ENCODE measurements at regions of chr9 and their contacts with region 1.

Region 1: GRCh38 chr9:96449845-96450612 is at the start of gene HABP4:
- DNase-seq: peak; percentile 97
- H3K4me3 ChIP-seq: peak within 1 kb of the TSS; percentile 80
- H3K27ac ChIP-seq: no peak within 1 kb of the TSS
- H3K4me1 ChIP-seq: peaks cover 16% of the 10 kb centered on the region
- CTCF ChIP-seq: no peak
- total RNA-seq, gene HABP4: 6.0 and 7.1 TPM in 2 replicates

Region 2: DNA sequence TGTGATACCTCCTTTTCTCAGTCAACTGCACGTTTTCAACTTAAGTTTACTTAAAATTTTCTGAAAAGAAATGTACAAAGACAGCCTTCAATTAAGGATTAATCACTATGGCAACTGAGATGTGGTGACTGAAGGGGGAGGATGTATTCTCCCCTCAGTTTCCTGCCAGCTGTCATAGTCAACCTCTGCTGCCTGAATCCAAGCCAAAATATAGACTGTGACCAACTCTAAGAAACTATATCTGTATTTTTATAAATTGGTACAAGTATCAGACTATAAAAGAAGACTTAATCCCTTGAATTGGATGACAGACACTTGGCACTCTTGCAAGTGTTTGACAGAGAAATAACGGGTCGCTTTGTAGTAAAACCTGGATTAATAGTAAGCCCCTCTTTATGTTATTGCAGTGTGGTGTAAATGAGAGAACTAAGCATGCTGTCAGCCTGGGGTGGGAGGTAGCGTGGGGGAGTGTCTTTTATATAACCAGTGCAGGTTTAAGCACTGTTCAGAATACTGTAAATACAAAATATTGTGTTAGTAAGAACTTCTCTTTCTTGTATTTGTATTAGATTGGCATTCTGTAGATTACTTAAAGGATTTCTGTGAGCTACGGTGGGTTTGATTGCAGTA is 468.2 kb before region 1 on chr9:
- CTCF ChIA-PET with region 1: no interaction called
- POLR2A ChIA-PET with region 1: no interaction called
- intact Hi-C with region 1: no loop called
- DNase-seq: peak; percentile 10
- H3K4me3 ChIP-seq: no peak overlapping the region
- H3K27ac ChIP-seq: no peak overlapping the region
- H3K4me1 ChIP-seq: no peaks in the 10 kb centered on the region
- CTCF ChIP-seq: no peak

Region 3: GRCh38 chr9:96418074-96418809 is 31.8 kb before region 1 on chr9 and contains the start of gene ZNF367:
- CTCF ChIA-PET with region 1: no interaction called
- POLR2A ChIA-PET with region 1: interaction called, 5 read pairs
- intact Hi-C with region 1: loop called (anchors 2 kb)
- DNase-seq: peak; percentile 95
- H3K4me3 ChIP-seq: peak within 1 kb of the TSS; percentile 99
- H3K27ac ChIP-seq: peak within 1 kb of the TSS; percentile 99
- H3K4me1 ChIP-seq: peaks cover 48% of the 10 kb centered on the region
- CTCF ChIP-seq: no peak
- total RNA-seq, gene ZNF367: 33.3 and 35.1 TPM in 2 replicates

Region 4: GRCh38 chr9:96491079-96491879 is 41.2 kb after region 1 on chr9:
- CTCF ChIA-PET with region 1: no interaction called
- POLR2A ChIA-PET with region 1: no interaction called
- intact Hi-C with region 1: no loop called
- DNase-seq: no peak
- H3K4me3 ChIP-seq: no peak overlapping the region
- H3K27ac ChIP-seq: no peak overlapping the region
- H3K4me1 ChIP-seq: peaks cover 9% of the 10 kb centered on the region
- CTCF ChIP-seq: no peak

Region 5: DNA sequence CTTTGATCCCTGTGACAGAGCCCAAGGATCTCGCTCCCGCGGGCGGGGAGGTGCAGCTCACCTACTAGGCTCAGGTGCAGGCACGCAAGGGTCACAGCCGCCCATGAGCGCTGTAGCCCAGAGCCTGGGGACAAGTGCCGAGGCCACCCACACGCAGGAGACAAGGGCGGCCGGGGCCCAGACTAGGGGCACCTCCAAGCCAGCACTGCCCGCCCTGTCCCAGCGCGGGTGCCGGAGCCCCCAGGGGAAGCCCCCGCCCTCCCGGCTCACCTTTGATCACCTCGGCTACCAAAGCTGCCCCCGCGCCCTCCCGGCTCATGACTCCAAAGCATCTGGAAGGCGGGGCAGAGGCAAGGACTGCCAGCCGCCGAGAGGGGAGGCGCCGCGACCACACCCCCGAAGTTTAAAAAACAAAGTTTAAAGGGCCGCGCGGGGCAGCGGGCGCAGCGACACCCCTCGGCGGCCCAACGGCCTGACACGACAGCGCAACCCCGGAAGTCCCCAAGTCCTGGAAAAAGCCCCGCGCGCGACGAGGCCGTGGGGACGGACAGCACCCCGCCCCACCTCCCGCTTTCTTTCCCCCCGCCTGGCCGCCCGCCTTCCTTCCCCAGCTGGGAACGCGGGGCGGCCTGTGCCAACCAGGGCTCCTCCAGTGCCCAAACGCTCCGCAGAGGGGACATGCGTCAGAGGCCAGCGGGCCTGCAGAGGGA is 116.6 kb after region 1 on chr9:
- CTCF ChIA-PET with region 1: no interaction called
- POLR2A ChIA-PET with region 1: interaction called, 3 read pairs
- intact Hi-C with region 1: loop called (anchors 2 kb)
- DNase-seq: peak; percentile 74
- H3K4me3 ChIP-seq: peak overlapping the region; percentile 66
- H3K27ac ChIP-seq: no peak overlapping the region
- H3K4me1 ChIP-seq: peaks cover 5% of the 10 kb centered on the region
- CTCF ChIP-seq: peak; percentile 76

Measured in OCI-LY7 (cell line).